ENCODE measurements at regions of chr15 and their contacts with region 1.

Region 1: DNA sequence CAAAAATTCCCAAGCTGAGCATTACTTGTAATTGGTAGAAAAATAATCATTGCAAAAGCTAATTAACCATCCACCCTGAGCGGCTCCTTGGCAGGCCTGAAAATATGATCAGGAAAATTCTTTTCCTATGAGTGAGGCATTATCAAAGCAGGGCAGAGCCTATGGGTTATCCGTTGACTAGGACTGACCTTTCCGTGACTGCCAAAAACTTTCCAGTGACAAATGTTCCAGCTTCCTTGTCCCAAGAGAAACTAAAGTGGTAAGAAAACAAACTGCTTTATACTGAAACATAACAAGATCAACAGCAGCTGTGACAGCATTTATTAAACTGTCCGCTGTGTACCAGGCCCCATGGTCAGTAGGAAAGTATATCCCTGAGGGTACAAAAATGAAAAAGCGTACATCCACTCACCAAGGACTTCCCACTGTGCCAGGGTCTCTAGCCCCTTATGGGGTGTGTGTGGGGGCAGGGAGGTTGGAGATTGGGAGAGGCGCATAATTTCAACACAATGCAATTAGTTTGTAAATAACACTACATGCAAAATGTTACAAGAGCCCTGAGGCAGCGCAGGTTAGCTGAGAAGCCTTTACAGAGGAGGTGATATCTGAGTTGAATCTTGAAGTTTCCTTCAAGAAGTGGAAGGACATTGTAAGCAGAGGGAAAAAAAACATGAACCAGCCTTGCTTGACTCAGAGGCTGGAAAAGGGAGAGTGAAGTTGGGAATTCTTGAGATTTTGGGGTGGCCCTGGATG is 8.5 kb downstream of the LIPC start:
- DNase-seq: no peak
- ATAC-seq: peak; percentile 77
- H3K4me3 ChIP-seq: no peak overlapping the region
- H3K4me1 ChIP-seq: peaks cover 32% of the 10 kb centered on the region
- CTCF ChIP-seq: no peak

Region 2: GRCh38 chr15:58551764-58552504 is 111.6 kb after region 1 on chr15:
- intact Hi-C with region 1: loop called in 1 of 2 experiments (anchors 10 kb)
- DNase-seq: peak; percentile 80 to 83 (median 82)
- ATAC-seq: peak; percentile 94
- H3K4me3 ChIP-seq: no peak overlapping the region
- H3K4me1 ChIP-seq: peaks cover 25% of the 10 kb centered on the region
- CTCF ChIP-seq: no peak

Measured in mucosa of descending colon (tissue), 3 donors.